Breast epithelium (tissue), 4 donors: ENCODE measurements at regions of chr5 and their contacts with region 1.

Region 1: GRCh38 chr5:115050866-115051265 is 118.8 kb downstream of the TRIM36 start:
- DNase-seq: no peak
- H3K4me3 ChIP-seq: no peak overlapping the region
- H3K27ac ChIP-seq: no peak overlapping the region
- H3K4me1 ChIP-seq: no peaks in the 10 kb centered on the region
- H3K27me3 ChIP-seq: no peaks in the 10 kb centered on the region
- CTCF ChIP-seq: no peak
- POLR2A ChIP-seq: no peak

Region 2: DNA sequence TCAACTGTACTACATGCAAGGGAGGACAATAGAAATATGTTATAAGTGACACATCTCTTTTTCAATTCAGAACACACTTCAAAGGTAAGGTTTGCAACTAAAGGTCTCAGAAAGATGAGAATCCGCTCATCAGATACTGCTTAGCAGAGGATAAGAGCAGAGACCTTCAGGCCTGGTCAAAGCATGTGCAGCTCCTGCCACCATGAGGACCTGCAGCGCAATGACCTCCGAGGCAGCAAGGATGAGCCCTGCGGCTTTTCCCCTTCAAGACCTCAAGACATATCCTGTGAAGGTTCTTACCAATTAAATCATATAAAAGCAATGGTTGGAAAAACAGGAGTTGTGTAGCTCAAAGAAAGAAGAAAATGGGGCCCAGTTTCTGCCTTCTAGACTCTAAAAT is 17.0 kb before region 1 on chr5:
- intact Hi-C with region 1: loop called (anchors 1 kb)
- DNase-seq: no peak
- H3K4me3 ChIP-seq: no peak overlapping the region
- H3K27ac ChIP-seq: no peak overlapping the region
- H3K4me1 ChIP-seq: no peaks in the 10 kb centered on the region
- H3K27me3 ChIP-seq: no peaks in the 10 kb centered on the region
- CTCF ChIP-seq: no peak
- POLR2A ChIP-seq: no peak

Region 3: GRCh38 chr5:115084246-115084793 is 33.5 kb after region 1 on chr5:
- intact Hi-C with region 1: no loop called
- DNase-seq: peak in 1 of 2 donors; percentile 45
- H3K4me3 ChIP-seq: no peak overlapping the region
- H3K27ac ChIP-seq: peak overlapping the region; percentile 25 to 36
- H3K4me1 ChIP-seq: no peaks in the 10 kb centered on the region
- H3K27me3 ChIP-seq: no peaks in the 10 kb centered on the region
- CTCF ChIP-seq: no peak
- POLR2A ChIP-seq: no peak